Caco-2 (cell line): ENCODE measurements at regions of chr17 and their contacts with region 1.

Region 1: DNA sequence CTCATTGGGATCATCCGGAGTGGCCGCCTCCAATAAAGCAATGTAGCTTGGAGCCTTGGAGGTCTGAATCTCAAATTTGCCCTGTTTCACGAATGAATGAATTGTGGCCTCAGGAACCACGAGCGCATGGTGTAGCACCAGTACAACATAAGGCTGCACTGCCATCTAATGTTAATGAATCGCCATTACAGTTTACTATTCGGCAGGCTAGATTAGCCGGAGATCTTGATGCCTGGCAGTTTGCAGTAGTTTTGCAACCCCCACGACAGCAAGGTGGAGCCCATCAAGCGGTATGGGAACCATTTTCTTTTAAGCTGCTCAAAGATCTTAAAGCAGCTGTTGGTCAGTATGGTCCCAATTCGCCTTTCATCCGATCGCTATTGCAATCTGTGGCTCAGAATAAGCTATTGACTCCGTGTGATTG is 18.8 kb downstream of the ALOX15B start:
- DNase-seq: peak; percentile 47 to 60
- H3K4me3 ChIP-seq: peak overlapping the region; percentile 46
- H3K4me3 Mint-ChIP-seq: peak overlapping the region; percentile 83
- H3K27ac Mint-ChIP-seq: peak overlapping the region; percentile 90
- H3K4me1 ChIP-seq: peaks cover 14% of the 10 kb centered on the region
- H3K4me1 Mint-ChIP-seq: peaks cover 13% of the 10 kb centered on the region
- H3K27me3 ChIP-seq: no peaks in the 10 kb centered on the region
- H3K27me3 Mint-ChIP-seq: no peaks in the 10 kb centered on the region
- CTCF ChIP-seq: peak; percentile 28 to 51

Region 2: GRCh38 chr17:7915611-7916382 is 141.9 kb before region 1 on chr17 and contains the start of gene RNF227:
- CTCF ChIA-PET with region 1: interaction called, 3 read pairs
- POLR2A ChIA-PET with region 1: interaction called, 5 read pairs
- intact Hi-C with region 1: loop called (anchors 2 kb)
- DNase-seq: peak; percentile 81 to 85
- H3K4me3 ChIP-seq: peak within 1 kb of the TSS; percentile 61
- H3K4me3 Mint-ChIP-seq: peak within 1 kb of the TSS; percentile 85
- H3K27ac Mint-ChIP-seq: peak within 1 kb of the TSS; percentile 92
- H3K4me1 ChIP-seq: 0 out of 2 replicates have a peak, but pooled peaks cover 3% of the 10 kb centered on the region
- H3K4me1 Mint-ChIP-seq: no peaks in the 10 kb centered on the region
- H3K27me3 ChIP-seq: no peaks in the 10 kb centered on the region
- H3K27me3 Mint-ChIP-seq: no peaks in the 10 kb centered on the region
- CTCF ChIP-seq: no peak
- total RNA-seq, gene RNF227: 4.0 and 5.0 TPM in 2 replicates

Region 3: DNA sequence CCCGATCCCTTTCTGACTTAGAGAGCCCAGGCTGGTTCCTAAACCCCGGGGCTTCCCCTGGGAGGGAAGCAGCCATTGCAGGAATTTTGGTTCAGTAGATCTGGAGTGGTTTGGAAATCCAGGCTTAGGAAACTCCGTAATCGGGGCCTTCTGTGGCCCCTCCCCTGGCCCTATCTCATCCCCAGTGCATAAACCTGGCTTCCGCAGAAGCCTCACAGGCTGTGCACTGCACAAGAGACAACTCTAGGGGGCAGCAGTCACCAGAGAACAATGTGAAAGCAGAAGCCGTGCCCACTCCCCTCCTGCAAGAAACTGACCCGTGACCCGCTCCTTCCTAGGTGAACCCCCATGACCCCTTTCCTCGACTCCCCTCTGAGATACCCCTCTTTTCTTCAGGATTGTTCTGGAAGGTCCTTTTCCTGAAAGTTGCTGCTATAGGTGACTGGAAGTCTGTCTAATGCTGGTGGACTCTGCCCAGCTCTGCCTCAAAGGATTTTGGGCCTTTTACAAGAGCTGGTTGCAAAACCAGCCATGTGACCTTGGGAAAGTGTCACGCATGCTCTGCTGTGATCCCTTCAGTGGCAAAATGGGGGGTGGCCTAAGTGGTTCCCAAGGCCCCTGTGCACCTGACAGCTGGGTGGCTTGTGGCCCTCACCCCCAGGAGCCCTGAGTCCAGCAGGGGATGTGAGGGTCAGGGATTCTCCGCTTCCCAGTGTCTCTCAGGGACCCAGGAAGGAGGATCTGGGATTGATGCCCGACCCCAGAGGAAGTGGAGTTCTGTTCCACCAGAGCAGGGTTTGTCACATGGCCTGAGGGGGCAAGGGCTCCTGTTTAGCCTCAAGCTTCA is 40.8 kb before region 1 on chr17:
- CTCF ChIA-PET with region 1: interaction called, 25 read pairs
- POLR2A ChIA-PET with region 1: interaction called, 3 read pairs
- intact Hi-C with region 1: loop called (anchors 1 kb)
- DNase-seq: peak; percentile 60 to 68
- H3K4me3 ChIP-seq: peak overlapping the region; percentile 66
- H3K4me3 Mint-ChIP-seq: peak overlapping the region; percentile 74
- H3K27ac Mint-ChIP-seq: no peak overlapping the region
- H3K4me1 ChIP-seq: peaks cover 9% of the 10 kb centered on the region
- H3K4me1 Mint-ChIP-seq: peaks cover 6% of the 10 kb centered on the region
- H3K27me3 ChIP-seq: no peaks in the 10 kb centered on the region
- H3K27me3 Mint-ChIP-seq: no peaks in the 10 kb centered on the region
- CTCF ChIP-seq: peak; percentile 47 to 53

Region 4: GRCh38 chr17:8041249-8041928 is 16.3 kb before region 1 on chr17:
- CTCF ChIA-PET with region 1: interaction called, 11 read pairs
- POLR2A ChIA-PET with region 1: interaction called, 3 read pairs
- intact Hi-C with region 1: loop called (anchors 2 kb)
- DNase-seq: peak in 1 of 2 experiments; percentile 39
- H3K4me3 ChIP-seq: no peak overlapping the region
- H3K4me3 Mint-ChIP-seq: no peak overlapping the region
- H3K27ac Mint-ChIP-seq: peak overlapping the region; percentile 42
- H3K4me1 ChIP-seq: peaks cover 7% of the 10 kb centered on the region
- H3K4me1 Mint-ChIP-seq: no peaks in the 10 kb centered on the region
- H3K27me3 ChIP-seq: no peaks in the 10 kb centered on the region
- H3K27me3 Mint-ChIP-seq: no peaks in the 10 kb centered on the region
- CTCF ChIP-seq: peak; percentile 25 to 32

Region 5: DNA sequence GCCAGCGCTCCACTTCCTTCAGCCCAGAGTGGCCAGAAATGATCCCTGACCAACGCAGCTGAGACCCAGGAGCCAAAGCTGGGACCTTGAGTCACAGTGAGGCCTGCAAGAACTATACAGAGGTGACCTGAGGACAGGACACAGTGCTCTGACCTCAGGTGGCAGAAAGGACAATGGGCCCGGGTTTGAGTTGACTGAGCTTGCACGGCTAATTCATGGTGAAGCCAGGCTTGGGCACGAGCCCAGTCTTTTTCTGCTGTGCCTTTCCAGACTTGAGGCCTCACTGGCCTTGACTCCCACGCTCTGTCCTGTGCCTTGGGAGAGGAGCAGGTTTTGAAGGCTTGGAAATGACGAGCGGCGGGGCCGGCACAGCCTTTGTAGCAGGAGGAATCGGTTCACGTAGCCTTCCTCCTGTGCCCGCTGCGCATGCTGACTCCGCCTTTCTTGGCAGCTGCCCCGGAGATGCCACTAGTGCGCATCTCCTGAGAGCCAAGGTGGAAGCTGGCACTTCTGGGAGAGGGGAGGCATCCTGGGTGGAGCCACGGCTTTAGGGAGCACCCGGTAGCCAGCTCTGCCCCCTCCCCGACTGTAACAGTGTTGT is 412.8 kb after region 1 on chr17:
- CTCF ChIA-PET with region 1: no interaction called
- POLR2A ChIA-PET with region 1: no interaction called
- intact Hi-C with region 1: no loop called
- DNase-seq: no peak
- H3K4me3 ChIP-seq: no peak overlapping the region
- H3K4me3 Mint-ChIP-seq: no peak overlapping the region
- H3K27ac Mint-ChIP-seq: no peak overlapping the region
- H3K4me1 ChIP-seq: no peaks in the 10 kb centered on the region
- H3K4me1 Mint-ChIP-seq: no peaks in the 10 kb centered on the region
- H3K27me3 ChIP-seq: no peaks in the 10 kb centered on the region
- H3K27me3 Mint-ChIP-seq: no peaks in the 10 kb centered on the region
- CTCF ChIP-seq: no peak